Activated T-helper 2 cell treated with anti-CD3 and anti-CD28 coated beads, Interferon-gamma antibody, Interleukin-2, Interleukin-4, amounts not matched to agents 10 μg/mL and 5 μg/mL and 100 μg/mL, durations not matched to agents 14 hours and 24 hours and 36 hours (primary cell): ENCODE measurements at regions of chr2 and their contacts with region 1.

Region 1: DNA sequence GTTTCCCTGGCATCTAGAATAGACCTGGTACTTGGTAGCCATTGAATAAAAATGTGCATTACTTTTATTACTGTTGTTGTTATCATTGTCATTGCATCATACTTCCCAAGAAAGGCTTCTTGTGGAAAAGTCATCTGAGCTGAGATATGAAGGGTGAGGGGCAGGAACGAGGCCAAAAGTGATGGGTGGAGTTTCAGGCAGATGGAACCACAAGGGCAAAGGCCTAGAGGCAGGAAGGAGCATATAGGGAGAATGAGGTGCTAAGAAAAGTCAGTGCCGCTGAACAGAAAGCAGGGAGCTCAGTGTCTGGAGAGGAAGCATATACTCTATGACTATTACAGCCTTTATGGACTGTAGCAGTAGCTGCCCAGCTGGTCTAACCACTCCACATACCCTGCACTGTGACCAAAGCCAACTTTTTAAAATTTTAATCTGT is 219.3 kb downstream of the SPP2 start:
- DNase-seq: no peak
- H3K4me3 Mint-ChIP-seq: no peak overlapping the region
- H3K27ac Mint-ChIP-seq: no peak overlapping the region
- H3K4me1 Mint-ChIP-seq: peaks cover 75% of the 10 kb centered on the region
- H3K27me3 Mint-ChIP-seq: no peaks in the 10 kb centered on the region

Region 2: DNA sequence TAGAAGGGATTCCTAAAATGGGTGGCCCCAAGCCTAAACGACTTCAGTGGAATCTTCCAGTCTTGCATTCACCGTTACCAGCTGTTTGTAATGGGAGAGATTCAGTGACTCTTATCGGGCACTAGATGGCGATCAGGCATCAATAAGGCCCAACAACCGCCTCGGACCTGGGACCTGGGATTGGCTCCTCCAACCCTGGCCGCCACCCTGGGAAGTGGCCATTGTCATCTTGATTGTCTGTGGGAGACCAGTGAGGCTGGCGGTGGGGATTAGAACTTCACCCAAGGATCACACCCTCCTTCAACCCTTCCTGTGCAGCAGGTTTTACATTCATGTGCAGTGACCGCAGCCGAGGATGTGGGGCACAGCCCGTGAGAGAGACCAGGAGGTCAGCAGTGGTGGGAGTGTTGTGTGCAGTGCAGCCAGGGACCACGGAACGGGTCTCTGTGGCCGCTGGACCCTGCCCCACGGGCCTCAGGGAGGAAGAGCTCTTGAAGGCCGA is 134.0 kb before region 1 on chr2:
- intact Hi-C with region 1: loop called (anchors 5 kb)
- DNase-seq: peak; percentile 33
- H3K4me3 Mint-ChIP-seq: no peak overlapping the region
- H3K27ac Mint-ChIP-seq: no peak overlapping the region
- H3K4me1 Mint-ChIP-seq: peaks cover 20% of the 10 kb centered on the region
- H3K27me3 Mint-ChIP-seq: peaks cover 14% of the 10 kb centered on the region

Region 3: DNA sequence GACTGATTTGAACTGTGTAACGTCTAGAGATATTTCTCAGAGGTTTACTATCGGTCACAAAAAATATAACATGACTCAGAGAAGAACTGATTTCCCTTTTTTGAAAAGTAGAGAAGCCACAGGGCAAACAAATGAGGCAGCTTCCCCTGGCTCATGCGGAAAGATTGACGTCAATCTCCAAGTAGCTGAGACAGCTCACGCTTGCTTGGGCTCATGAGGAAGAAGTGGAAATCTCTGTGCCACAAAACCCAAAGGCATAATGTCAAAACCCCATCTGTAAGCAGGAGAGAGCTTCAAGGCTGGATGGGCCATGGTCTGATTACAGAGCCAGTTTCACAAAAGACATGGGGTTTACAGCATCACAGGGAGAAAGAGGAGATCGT is 39.0 kb after region 1 on chr2:
- intact Hi-C with region 1: loop called (anchors 1 kb)
- DNase-seq: peak; percentile 78
- H3K4me3 Mint-ChIP-seq: peak overlapping the region; percentile 51
- H3K27ac Mint-ChIP-seq: peak overlapping the region; percentile 96
- H3K4me1 Mint-ChIP-seq: peaks cover 60% of the 10 kb centered on the region
- H3K27me3 Mint-ChIP-seq: no peaks in the 10 kb centered on the region

Region 4: DNA sequence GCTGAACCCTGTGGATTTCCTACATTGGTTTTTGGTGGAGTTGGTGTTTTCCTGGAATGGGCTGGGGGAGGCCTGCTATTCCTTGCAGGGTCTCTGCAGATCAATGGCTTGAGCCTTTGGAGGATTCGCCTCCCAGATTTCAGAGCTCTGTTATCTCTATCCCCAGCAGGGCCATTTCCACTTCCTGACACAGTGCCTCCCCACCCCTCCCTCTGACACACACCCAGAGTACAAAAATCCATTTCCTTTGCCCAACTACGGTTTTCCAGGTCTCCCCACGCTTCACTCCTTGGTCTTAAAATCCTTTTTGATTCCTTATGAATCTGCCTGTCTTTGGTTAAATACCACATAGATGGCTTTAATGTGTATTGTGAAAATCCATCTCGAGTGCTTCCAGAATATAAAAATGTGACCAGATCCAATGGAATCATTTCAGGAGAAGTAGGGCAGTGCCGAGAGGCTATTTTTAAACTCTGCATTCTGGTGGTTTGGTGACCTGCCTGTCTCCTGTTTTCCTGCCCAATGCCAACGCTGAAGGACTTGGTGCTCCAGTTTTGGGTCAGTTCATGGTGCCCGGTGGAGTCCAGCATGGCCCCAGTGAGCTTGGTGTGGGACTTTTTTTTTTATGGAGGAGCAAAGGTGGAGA is 166.2 kb after region 1 on chr2:
- intact Hi-C with region 1: no loop called
- DNase-seq: no peak
- H3K4me3 Mint-ChIP-seq: no peak overlapping the region
- H3K27ac Mint-ChIP-seq: no peak overlapping the region
- H3K4me1 Mint-ChIP-seq: peaks cover 43% of the 10 kb centered on the region
- H3K27me3 Mint-ChIP-seq: no peaks in the 10 kb centered on the region

Region 5: DNA sequence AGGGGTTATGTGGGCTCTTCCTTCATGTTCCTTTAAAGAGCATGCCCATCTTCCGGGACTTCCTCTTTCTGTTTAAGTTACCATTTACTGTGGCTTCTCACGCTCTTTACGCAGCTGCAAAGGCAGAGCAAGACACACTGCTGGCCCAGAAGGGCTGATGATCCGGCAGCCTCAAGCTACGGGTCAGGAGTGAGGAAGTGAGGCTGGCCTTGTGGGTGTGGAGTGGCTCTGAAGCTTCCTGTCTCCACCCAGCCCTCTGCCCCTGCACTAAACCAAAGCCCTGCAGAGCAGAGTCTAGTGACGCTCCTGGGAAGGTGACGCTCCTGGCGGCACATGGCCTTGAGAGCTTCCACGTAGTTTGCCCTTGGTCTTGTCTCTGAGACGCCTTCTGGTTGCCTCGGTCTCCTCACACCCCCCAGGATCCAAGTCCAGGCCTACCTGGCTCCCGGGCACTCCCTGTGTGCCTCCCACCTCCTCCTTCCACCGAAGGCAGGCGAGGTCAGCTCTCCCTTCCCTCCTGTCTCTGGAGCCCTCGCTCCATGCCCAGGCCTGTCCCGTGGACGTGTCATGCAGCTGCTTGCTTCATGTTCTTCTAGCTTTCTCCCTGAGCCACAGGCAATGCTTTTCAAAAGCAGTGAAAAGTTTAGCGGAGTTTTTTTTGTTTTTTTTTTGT is 176.8 kb after region 1 on chr2:
- intact Hi-C with region 1: loop called (anchors 5 kb)
- DNase-seq: peak; percentile 85
- H3K4me3 Mint-ChIP-seq: peak overlapping the region; percentile 53
- H3K27ac Mint-ChIP-seq: peak overlapping the region; percentile 96
- H3K4me1 Mint-ChIP-seq: peaks cover 77% of the 10 kb centered on the region
- H3K27me3 Mint-ChIP-seq: no peaks in the 10 kb centered on the region

Region 6: GRCh38 chr2:234881413-234882241 is 611.8 kb after region 1 on chr2:
- intact Hi-C with region 1: loop called (anchors 10 kb)
- DNase-seq: peak; percentile 32
- H3K4me3 Mint-ChIP-seq: no peak overlapping the region
- H3K27ac Mint-ChIP-seq: no peak overlapping the region
- H3K4me1 Mint-ChIP-seq: peaks cover 22% of the 10 kb centered on the region
- H3K27me3 Mint-ChIP-seq: peaks cover 10% of the 10 kb centered on the region

Region 7: GRCh38 chr2:235270956-235271355 is 1001.2 kb after region 1 on chr2:
- intact Hi-C with region 1: loop called (anchors 10 kb)
- DNase-seq: peak; percentile 46
- H3K4me3 Mint-ChIP-seq: no peak overlapping the region
- H3K27ac Mint-ChIP-seq: no peak overlapping the region
- H3K4me1 Mint-ChIP-seq: peaks cover 7% of the 10 kb centered on the region
- H3K27me3 Mint-ChIP-seq: peaks cover 60% of the 10 kb centered on the region